ENCODE measurements at regions of chr3 and their contacts with region 1.

Region 1: GRCh38 chr3:167078070-167078622 is 302.0 kb downstream of the ZBBX start:
- DNase-seq: no peak
- ATAC-seq: no peak
- H3K4me3 ChIP-seq: no peak overlapping the region
- H3K4me3 Mint-ChIP-seq: no peak overlapping the region
- H3K27ac ChIP-seq: no peak overlapping the region
- H3K27ac Mint-ChIP-seq: no peak overlapping the region
- H3K4me1 ChIP-seq: no peaks in the 10 kb centered on the region
- H3K4me1 Mint-ChIP-seq: no peaks in the 10 kb centered on the region
- H3K27me3 ChIP-seq: no peaks in the 10 kb centered on the region
- H3K27me3 Mint-ChIP-seq: no peaks in the 10 kb centered on the region
- CTCF ChIP-seq: no peak

Region 2: DNA sequence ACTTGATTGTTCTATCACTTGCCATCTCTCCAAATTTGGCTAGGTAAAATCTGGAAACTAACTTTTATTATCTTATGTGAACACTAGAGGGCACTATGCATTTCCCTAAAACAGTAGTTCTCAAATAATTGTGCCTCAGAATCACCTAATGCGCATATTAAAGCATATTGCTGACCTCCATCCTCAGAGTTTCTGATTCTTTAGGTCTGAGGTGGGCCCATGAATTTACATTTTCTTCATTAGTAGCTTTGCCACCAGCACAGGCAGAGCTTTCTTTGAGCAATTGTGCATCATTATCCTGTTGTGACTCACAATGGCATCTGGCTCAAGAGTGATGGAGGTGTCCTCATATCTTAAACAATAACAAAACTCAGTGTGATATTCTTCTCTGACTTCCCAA is 1223.5 kb before region 1 on chr3:
- CTCF ChIA-PET with region 1: no interaction called
- POLR2A ChIA-PET with region 1: no interaction called
- intact Hi-C with region 1: no loop called
- DNase-seq: peak; percentile 5
- ATAC-seq: no peak
- H3K4me3 ChIP-seq: no peak overlapping the region
- H3K4me3 Mint-ChIP-seq: no peak overlapping the region
- H3K27ac ChIP-seq: no peak overlapping the region
- H3K27ac Mint-ChIP-seq: no peak overlapping the region
- H3K4me1 ChIP-seq: no peaks in the 10 kb centered on the region
- H3K4me1 Mint-ChIP-seq: no peaks in the 10 kb centered on the region
- H3K27me3 ChIP-seq: no peaks in the 10 kb centered on the region
- H3K27me3 Mint-ChIP-seq: no peaks in the 10 kb centered on the region
- CTCF ChIP-seq: peak; percentile 69

Region 3: GRCh38 chr3:167001374-167001773 is 76.8 kb before region 1 on chr3:
- CTCF ChIA-PET with region 1: no interaction called
- POLR2A ChIA-PET with region 1: no interaction called
- intact Hi-C with region 1: loop called (anchors 2 kb)
- DNase-seq: no peak
- ATAC-seq: no peak
- H3K4me3 ChIP-seq: no peak overlapping the region
- H3K4me3 Mint-ChIP-seq: no peak overlapping the region
- H3K27ac ChIP-seq: no peak overlapping the region
- H3K27ac Mint-ChIP-seq: no peak overlapping the region
- H3K4me1 ChIP-seq: no peaks in the 10 kb centered on the region
- H3K4me1 Mint-ChIP-seq: no peaks in the 10 kb centered on the region
- H3K27me3 ChIP-seq: no peaks in the 10 kb centered on the region
- H3K27me3 Mint-ChIP-seq: no peaks in the 10 kb centered on the region
- CTCF ChIP-seq: no peak